ENCODE measurements at regions of chr19 and their contacts with region 1.

Region 1: GRCh38 chr19:49879243-49879963 is 1.9 kb downstream of the TBC1D17 start:
- DNase-seq: no peak
- ATAC-seq: no peak
- H3K4me3 ChIP-seq: no peak overlapping the region
- H3K4me3 Mint-ChIP-seq: peak overlapping the region in 2 of 3 donors; percentile 21 to 54
- H3K27ac ChIP-seq: no peak overlapping the region
- H3K27ac Mint-ChIP-seq: no peak overlapping the region
- H3K4me1 ChIP-seq: peaks cover 10 to 29% of the 10 kb centered on the region in 2 experiments
- H3K4me1 Mint-ChIP-seq: peaks cover 24 to 31% (median 28%) of the 10 kb centered on the region in 3 donors
- H3K27me3 ChIP-seq: no peaks in the 10 kb centered on the region
- H3K27me3 Mint-ChIP-seq: no peaks in the 10 kb centered on the region

Region 2: GRCh38 chr19:49889687-49890348 is 10.4 kb after region 1 on chr19:
- CTCF ChIA-PET with region 1: no interaction called
- POLR2A ChIA-PET with region 1: no interaction called
- DNase-seq: peak; percentile 44 to 89 (median 65)
- ATAC-seq: peak; percentile 73 to 84 (median 82)
- H3K4me3 ChIP-seq: peak overlapping the region; percentile 62 to 65
- H3K4me3 Mint-ChIP-seq: peak overlapping the region; percentile 76 to 80 (median 76)
- H3K27ac ChIP-seq: peak overlapping the region; percentile 44
- H3K27ac Mint-ChIP-seq: peak overlapping the region; percentile 58 to 61
- H3K4me1 ChIP-seq: peaks cover 0 to 21% of the 10 kb centered on the region in 2 experiments
- H3K4me1 Mint-ChIP-seq: peaks cover 6 to 18% (median 12%) of the 10 kb centered on the region in 3 donors
- H3K27me3 ChIP-seq: no peaks in the 10 kb centered on the region
- H3K27me3 Mint-ChIP-seq: no peaks in the 10 kb centered on the region

Region 3: GRCh38 chr19:50050384-50051224 is 171.2 kb after region 1 on chr19:
- CTCF ChIA-PET with region 1: no interaction called
- POLR2A ChIA-PET with region 1: interaction called in 1 of 2 experiments, 10 read pairs
- DNase-seq: peak; percentile 38 to 90 (median 77)
- ATAC-seq: peak; percentile 85 to 90 (median 88)
- H3K4me3 ChIP-seq: peak overlapping the region; percentile 60 to 77
- H3K4me3 Mint-ChIP-seq: peak overlapping the region; percentile 89 to 93 (median 91)
- H3K27ac ChIP-seq: peak overlapping the region; percentile 90
- H3K27ac Mint-ChIP-seq: peak overlapping the region; percentile 87 to 90
- H3K4me1 ChIP-seq: peaks cover 0 to 17% of the 10 kb centered on the region in 2 experiments
- H3K4me1 Mint-ChIP-seq: peaks cover 14 to 15% (median 14%) of the 10 kb centered on the region in 3 donors
- H3K27me3 ChIP-seq: peaks cover 0 to 6% of the 10 kb centered on the region in 2 experiments
- H3K27me3 Mint-ChIP-seq: peaks cover under 1 to 4% of the 10 kb centered on the region in 2 donors

Region 4: GRCh38 chr19:50266896-50267295 is 387.5 kb after region 1 on chr19:
- CTCF ChIA-PET with region 1: no interaction called
- POLR2A ChIA-PET with region 1: no interaction called
- DNase-seq: peak in 8 of 35 experiments; percentile 2 to 22 (median 6)
- ATAC-seq: peak in 1 of 4 experiments; percentile 37
- H3K4me3 ChIP-seq: no peak overlapping the region
- H3K4me3 Mint-ChIP-seq: no peak overlapping the region
- H3K27ac ChIP-seq: no peak overlapping the region
- H3K27ac Mint-ChIP-seq: no peak overlapping the region
- H3K4me1 ChIP-seq: no peaks in the 10 kb centered on the region
- H3K4me1 Mint-ChIP-seq: no peaks in the 10 kb centered on the region
- H3K27me3 ChIP-seq: peaks cover 0 to 51% of the 10 kb centered on the region in 2 experiments
- H3K27me3 Mint-ChIP-seq: peaks cover 25 to 29% of the 10 kb centered on the region in 2 donors

Measured in T-cell (primary cell).